Dorsolateral prefrontal cortex (tissue), 120 donors: ENCODE measurements at regions of chr3 and their contacts with region 1.

Region 1: DNA sequence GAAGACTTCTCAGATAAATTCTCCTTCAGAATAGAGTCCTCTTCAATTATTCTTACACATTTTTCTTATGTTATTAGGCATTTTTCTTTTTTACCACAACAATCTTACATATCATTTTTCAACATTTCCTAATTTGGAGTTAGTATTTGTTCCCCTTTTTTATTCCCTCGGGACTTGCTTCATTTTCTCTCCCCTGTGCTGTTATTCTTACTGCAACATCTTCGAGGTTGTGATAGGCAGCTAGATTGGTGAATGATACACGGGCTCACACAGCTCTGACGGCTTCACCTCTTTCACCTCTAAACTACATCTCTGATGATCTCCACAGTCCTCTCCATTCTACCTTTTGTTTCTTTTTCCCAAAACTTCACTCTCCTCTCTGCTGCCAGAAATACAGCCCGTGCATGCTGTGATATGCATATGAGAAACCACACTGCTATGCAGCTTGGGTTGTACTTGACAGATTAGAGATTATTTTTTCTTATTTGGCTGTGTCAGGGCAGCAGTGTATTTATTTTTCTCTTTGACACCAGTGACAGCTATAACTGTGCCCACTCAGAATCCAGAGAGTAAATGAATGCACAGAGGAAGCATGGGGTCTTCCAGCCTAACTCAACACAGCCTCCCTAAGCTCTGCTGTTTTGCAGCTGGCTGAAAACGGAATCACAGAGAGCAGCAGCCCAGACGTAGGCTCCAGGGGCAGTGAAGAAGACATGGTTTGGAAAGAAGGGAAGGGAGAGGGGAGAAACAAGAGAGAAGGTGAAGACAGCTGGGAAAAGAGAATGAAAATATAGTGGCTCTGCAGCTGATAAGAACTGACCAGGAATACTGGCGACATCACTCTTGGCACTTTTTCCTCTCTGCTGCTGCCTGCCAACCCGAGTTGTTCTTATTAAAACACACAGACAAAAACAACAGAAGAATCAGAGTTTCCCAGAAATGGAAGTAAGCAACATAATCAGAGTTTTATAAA is 61.8 kb downstream of the SLC9A9 start:
- DNase-seq: peak in 2 of 10 donors; percentile 48 to 55
- H3K4me3 ChIP-seq: peak overlapping the region in 54 of 59 donors; percentile 2 to 63 (median 32)
- H3K27ac ChIP-seq: peak overlapping the region in 44 of 59 donors; percentile 1 to 72 (median 48)
- H3K27me3 ChIP-seq: no peaks in the 10 kb centered on the region
- CTCF ChIP-seq: no peak

Region 2: GRCh38 chr3:143847787-143848631 is 61.5 kb after region 1 on chr3 and contains the start of gene SLC9A9:
- intact Hi-C with region 1: loop called in 1 of 2 experiments (anchors 10 kb)
- DNase-seq: peak; percentile 6 to 84 (median 60)
- H3K4me3 ChIP-seq: peak within 1 kb of the TSS; percentile 56 to 90 (median 74)
- H3K27ac ChIP-seq: peak within 1 kb of the TSS in 58 of 59 donors; percentile 4 to 92 (median 80)
- H3K27me3 ChIP-seq: no peaks in the 10 kb centered on the region
- CTCF ChIP-seq: peak in 3 of 56 donors; percentile 5 to 10 (median 6)
- total RNA-seq, gene SLC9A9: 12.3 to 54.8 (median 25.0) TPM

Region 3: DNA sequence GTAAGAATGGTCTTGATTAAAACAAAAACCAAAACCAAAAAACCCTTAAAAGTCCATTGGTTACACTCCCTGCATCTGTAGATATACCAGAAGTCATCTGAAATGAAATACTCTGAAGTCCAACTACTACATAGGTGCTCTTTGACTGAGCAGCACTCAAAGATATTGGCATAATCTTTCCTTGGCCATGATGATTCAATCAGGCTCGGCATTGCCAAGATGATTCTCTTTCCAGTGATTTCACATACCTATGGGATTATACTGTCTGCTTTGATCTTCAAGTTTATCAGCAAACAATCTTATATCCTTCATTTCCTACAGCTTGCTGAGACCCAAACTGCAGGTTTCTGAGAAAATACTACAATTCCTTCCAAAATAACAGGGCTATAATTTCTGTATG is 149.2 kb after region 1 on chr3:
- intact Hi-C with region 1: no loop called
- DNase-seq: no peak
- H3K4me3 ChIP-seq: no peak overlapping the region
- H3K27ac ChIP-seq: no peak overlapping the region
- H3K27me3 ChIP-seq: no peaks in the 10 kb centered on the region
- CTCF ChIP-seq: no peak